ENCODE measurements at regions of chr7 and their contacts with region 1.

Region 1: GRCh38 chr7:95916573-95917297 is 144.4 kb downstream of the DYNC1I1 start:
- DNase-seq: peak; percentile 61 to 77
- H3K4me3 ChIP-seq: no peak overlapping the region
- H3K4me3 Mint-ChIP-seq: no peak overlapping the region
- H3K27ac Mint-ChIP-seq: no peak overlapping the region
- H3K4me1 ChIP-seq: no peaks in the 10 kb centered on the region
- H3K4me1 Mint-ChIP-seq: no peaks in the 10 kb centered on the region
- H3K27me3 ChIP-seq: no peaks in the 10 kb centered on the region
- H3K27me3 Mint-ChIP-seq: no peaks in the 10 kb centered on the region
- CTCF ChIP-seq: peak; percentile 87 to 88

Region 2: GRCh38 chr7:95993380-95993779 is 76.6 kb after region 1 on chr7:
- CTCF ChIA-PET with region 1: no interaction called
- POLR2A ChIA-PET with region 1: no interaction called
- intact Hi-C with region 1: loop called (anchors 5 kb)
- DNase-seq: no peak
- H3K4me3 ChIP-seq: no peak overlapping the region
- H3K4me3 Mint-ChIP-seq: no peak overlapping the region
- H3K27ac Mint-ChIP-seq: no peak overlapping the region
- H3K4me1 ChIP-seq: peaks cover 13% of the 10 kb centered on the region; the same call in 1 of the 2 replicates
- H3K4me1 Mint-ChIP-seq: peaks cover 18% of the 10 kb centered on the region
- H3K27me3 ChIP-seq: no peaks in the 10 kb centered on the region
- H3K27me3 Mint-ChIP-seq: peaks cover 3% of the 10 kb centered on the region
- CTCF ChIP-seq: peak; percentile 20 to 26

Region 3: DNA sequence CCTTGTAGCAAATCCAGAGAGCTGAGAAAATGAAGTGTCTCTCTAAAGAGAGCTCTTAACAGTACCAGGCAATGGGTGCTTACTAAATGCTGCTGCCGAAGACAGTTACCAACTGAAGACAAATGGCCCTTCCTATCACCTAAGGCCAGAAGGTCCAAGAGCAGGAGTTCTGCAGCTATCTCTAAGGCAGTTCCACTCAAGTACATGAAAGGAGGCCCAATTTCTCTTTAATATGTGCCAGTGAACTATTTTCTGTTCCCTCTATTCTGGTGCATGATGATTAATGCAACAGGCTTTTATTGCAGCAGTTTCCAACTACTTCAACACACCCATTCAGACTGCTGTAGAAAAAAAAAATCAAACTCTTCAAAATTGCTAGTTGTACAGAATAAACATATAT is 282.7 kb after region 1 on chr7:
- CTCF ChIA-PET with region 1: no interaction called
- POLR2A ChIA-PET with region 1: no interaction called
- intact Hi-C with region 1: loop called (anchors 5 kb)
- DNase-seq: no peak
- H3K4me3 ChIP-seq: no peak overlapping the region
- H3K4me3 Mint-ChIP-seq: no peak overlapping the region
- H3K27ac Mint-ChIP-seq: peak overlapping the region; percentile 36
- H3K4me1 ChIP-seq: peaks cover 8% of the 10 kb centered on the region; the same call in 1 of the 2 replicates
- H3K4me1 Mint-ChIP-seq: peaks cover 23% of the 10 kb centered on the region
- H3K27me3 ChIP-seq: no peaks in the 10 kb centered on the region
- H3K27me3 Mint-ChIP-seq: no peaks in the 10 kb centered on the region
- CTCF ChIP-seq: no peak

Region 4: GRCh38 chr7:96596120-96596826 is 679.5 kb after region 1 on chr7:
- CTCF ChIA-PET with region 1: no interaction called
- POLR2A ChIA-PET with region 1: no interaction called
- intact Hi-C with region 1: loop called (anchors 5 kb)
- DNase-seq: peak in 1 of 2 experiments; percentile 20
- H3K4me3 ChIP-seq: no peak overlapping the region
- H3K4me3 Mint-ChIP-seq: no peak overlapping the region
- H3K27ac Mint-ChIP-seq: no peak overlapping the region
- H3K4me1 ChIP-seq: peaks cover 16% of the 10 kb centered on the region
- H3K4me1 Mint-ChIP-seq: peaks cover 12% of the 10 kb centered on the region
- H3K27me3 ChIP-seq: no peaks in the 10 kb centered on the region
- H3K27me3 Mint-ChIP-seq: no peaks in the 10 kb centered on the region
- CTCF ChIP-seq: peak in 1 of 2 experiments; percentile 18

Region 5: DNA sequence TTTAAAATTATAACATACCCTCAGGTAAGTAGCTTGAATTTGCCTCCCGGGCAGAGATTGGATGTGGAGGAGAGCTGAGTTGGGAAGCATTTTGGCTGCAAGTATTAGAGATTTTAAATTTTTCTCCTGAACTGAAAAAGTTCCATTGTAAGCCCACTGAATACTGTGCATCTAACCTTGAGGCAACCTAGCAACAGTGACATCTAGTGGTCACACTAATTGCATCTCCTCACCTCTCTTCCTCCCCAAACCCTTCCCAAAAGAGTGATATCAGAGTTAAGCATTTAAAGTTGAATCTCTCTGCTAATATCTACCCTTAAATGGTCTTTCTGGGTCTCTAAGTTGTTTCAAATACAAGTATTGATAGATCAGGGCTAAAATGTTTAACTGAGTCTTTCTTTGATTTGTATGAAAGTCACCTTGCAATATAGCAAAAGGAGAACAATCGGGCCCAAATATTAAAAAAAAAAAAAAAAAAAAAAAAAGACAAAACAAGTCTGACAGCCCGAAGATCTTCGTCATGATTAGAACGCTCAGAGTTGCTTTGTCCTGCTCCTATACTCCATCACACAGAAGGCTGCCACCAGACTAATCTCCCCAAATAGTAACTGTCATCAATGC is 1148.3 kb after region 1 on chr7:
- CTCF ChIA-PET with region 1: no interaction called
- POLR2A ChIA-PET with region 1: no interaction called
- intact Hi-C with region 1: loop called (anchors 1 kb)
- DNase-seq: peak in 1 of 2 experiments; percentile 55
- H3K4me3 ChIP-seq: no peak overlapping the region
- H3K4me3 Mint-ChIP-seq: no peak overlapping the region
- H3K27ac Mint-ChIP-seq: no peak overlapping the region
- H3K4me1 ChIP-seq: no peaks in the 10 kb centered on the region
- H3K4me1 Mint-ChIP-seq: no peaks in the 10 kb centered on the region
- H3K27me3 ChIP-seq: no peaks in the 10 kb centered on the region
- H3K27me3 Mint-ChIP-seq: peaks cover 6% of the 10 kb centered on the region
- CTCF ChIP-seq: peak; percentile 49 to 74

Measured in Caco-2 (cell line).